Endothelial cell of umbilical vein (primary cell): ENCODE measurements at regions of chr4 and their contacts with region 1.

Region 1: GRCh38 chr4:55269995-55270394 is 76.0 kb upstream of the SRD5A3 start:
- DNase-seq: peak; percentile 96
- H3K4me3 ChIP-seq: no peak overlapping the region
- H3K27ac ChIP-seq: no peak overlapping the region
- H3K4me1 ChIP-seq: peaks cover 13% of the 10 kb centered on the region
- H3K27me3 ChIP-seq: peaks cover 5 to 7% of the 10 kb centered on the region in 2 experiments
- CTCF ChIP-seq: no peak
- POLR2A ChIP-seq: peak; percentile 51

Region 2: DNA sequence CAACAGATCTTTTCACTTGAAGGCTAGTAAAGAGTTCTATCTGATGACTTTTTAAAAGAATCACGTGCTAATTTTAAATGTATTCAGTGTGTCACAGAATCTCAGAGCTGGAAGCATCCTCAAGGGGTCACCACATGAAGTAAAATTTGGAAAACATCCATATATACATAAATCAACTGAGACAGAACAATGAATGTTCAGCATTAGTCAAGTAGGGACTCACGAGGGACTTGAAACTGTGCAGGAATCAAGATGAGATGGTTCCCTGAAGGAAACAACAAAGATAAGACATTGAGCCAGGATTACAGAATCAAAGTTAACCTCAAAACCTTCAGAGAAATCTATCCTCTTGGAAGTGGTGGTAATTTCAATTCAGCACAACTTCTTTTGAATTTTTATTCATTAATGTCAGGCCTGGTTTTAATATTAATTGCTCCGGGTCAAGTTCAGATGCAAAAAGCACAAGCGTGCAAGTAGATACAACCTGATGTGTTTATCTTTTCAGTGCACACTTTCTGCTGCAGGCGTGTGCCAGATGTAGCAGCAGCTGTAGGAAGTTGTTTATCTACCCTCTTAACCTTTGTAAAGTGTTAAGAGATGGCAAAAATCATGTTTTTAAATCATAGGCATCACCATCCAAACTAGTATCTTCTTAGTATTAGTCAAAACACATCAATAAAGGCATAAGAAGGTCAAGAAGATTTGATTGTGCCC is 11.7 kb before region 1 on chr4:
- CTCF ChIA-PET with region 1: interaction called, 5 read pairs
- POLR2A ChIA-PET with region 1: no interaction called
- dilution Hi-C with region 1: no loop called
- intact Hi-C with region 1: loop called (anchors 1 kb)
- DNase-seq: peak; percentile 90
- H3K4me3 ChIP-seq: no peak overlapping the region
- H3K27ac ChIP-seq: peak overlapping the region; percentile 1
- H3K4me1 ChIP-seq: peaks cover 13% of the 10 kb centered on the region
- H3K27me3 ChIP-seq: no peaks in the 10 kb centered on the region
- CTCF ChIP-seq: no peak
- POLR2A ChIP-seq: peak; percentile 35

Region 3: DNA sequence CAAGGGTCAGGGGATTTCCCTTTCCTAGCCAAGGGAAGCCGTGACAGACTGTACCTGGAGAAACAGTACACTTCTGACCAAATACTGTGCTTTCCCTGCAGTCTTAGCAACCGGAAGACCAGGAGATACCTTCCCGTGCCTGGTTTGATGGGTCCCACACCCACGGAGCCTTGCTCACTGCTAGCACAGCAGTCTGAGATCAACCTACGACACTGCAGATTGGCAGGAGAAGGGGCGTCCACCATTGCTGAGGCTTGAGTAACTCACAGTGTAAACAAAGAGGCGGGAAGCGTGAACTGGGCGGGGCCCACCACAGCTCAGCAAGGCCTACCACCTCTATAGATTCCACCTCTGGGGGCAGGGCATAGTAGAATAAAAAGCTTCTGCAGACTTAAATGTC is 27.4 kb after region 1 on chr4:
- CTCF ChIA-PET with region 1: interaction called, 4 read pairs
- POLR2A ChIA-PET with region 1: no interaction called
- dilution Hi-C with region 1: no loop called
- intact Hi-C with region 1: loop called (anchors 2 kb)
- DNase-seq: no peak
- H3K4me3 ChIP-seq: no peak overlapping the region
- H3K27ac ChIP-seq: no peak overlapping the region
- H3K4me1 ChIP-seq: peaks cover 20% of the 10 kb centered on the region
- H3K27me3 ChIP-seq: peaks cover 0 to 4% of the 10 kb centered on the region in 2 experiments
- CTCF ChIP-seq: no peak
- POLR2A ChIP-seq: no peak

Region 4: DNA sequence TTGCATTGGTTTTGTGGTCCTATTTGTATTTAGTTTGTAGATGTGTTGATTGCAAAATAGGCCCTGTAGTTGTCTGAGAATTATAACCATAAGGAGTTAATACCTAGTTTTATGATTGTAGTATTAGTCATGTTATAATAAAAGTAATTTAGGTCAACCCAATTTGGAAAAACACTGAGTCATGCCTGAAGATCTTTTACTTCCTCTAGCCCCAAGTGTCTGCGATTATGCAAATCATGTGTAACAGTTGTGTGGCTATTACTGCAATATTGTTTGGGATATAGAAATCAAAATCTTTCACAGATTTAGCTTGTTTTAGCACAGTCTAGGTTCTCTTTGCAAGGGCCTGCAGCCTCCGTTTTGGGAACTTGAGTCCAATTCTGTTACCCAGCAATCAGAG is 88.7 kb after region 1 on chr4:
- CTCF ChIA-PET with region 1: no interaction called
- POLR2A ChIA-PET with region 1: no interaction called
- dilution Hi-C with region 1: no loop called
- intact Hi-C with region 1: no loop called
- DNase-seq: peak; percentile 72
- H3K4me3 ChIP-seq: no peak overlapping the region
- H3K27ac ChIP-seq: peak overlapping the region; percentile 57
- H3K4me1 ChIP-seq: peaks cover 19% of the 10 kb centered on the region
- H3K27me3 ChIP-seq: no peaks in the 10 kb centered on the region
- CTCF ChIP-seq: no peak
- POLR2A ChIP-seq: no peak